PC-9 (cell line): ENCODE measurements at regions of chr22 and their contacts with region 1.

Region 1: DNA sequence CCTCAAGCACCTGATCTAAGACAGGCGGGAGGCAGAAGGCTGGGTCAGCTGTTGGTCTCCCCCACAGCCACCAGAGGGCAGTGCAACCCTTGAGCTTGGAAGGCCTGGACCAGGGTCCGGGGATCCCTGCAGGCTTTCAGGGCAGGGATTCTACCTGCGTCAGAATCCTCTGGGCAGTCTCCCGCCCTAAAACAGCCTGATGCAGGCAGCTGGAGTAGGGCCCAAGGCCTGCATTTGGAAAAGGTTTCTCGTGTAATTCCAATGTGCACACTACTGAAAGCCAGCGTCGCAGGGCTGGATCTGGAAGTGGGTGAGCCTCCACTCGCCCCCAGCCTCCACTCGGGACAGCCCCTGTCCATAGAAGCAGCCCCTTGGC is 31.8 kb downstream of the BID start:
- DNase-seq: peak; percentile 48 to 54
- H3K4me3 ChIP-seq: no peak overlapping the region
- H3K27ac ChIP-seq: no peak overlapping the region
- H3K4me1 ChIP-seq: no peaks in the 10 kb centered on the region
- H3K27me3 ChIP-seq: no peaks in the 10 kb centered on the region
- CTCF ChIP-seq: peak; percentile 74

Region 2: DNA sequence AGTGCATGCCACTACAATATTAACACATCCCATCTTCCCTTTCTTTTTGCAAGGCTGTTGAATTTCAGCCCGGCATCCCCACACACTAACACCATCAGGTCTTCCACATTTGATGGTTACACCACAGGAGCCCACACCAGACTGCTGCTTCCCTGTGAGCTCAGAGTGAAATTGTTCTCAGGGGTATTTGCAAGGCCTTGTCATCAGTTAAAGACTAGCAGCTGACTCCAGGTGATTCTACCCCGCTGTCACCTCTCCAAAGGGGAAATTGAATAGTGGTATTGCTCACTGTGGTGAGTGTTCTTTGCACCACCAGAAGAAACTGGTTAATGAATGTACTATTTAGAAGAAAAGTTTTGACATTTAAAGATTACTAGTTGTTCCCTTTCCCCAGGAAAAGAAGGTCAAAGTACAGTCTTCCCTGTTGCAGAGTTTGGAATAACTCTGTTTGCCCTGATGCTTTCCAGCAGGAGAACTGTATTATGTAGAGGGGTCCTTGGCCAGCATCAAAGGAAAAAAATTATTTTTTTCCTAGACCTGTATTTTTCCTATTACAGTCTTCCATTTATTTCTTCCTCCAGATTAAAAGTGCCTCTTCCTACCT is 10.2 kb before region 1 on chr22:
- CTCF ChIA-PET with region 1: interaction called, 12 read pairs
- POLR2A ChIA-PET with region 1: no interaction called
- intact Hi-C with region 1: no loop called
- DNase-seq: no peak
- H3K4me3 ChIP-seq: no peak overlapping the region
- H3K27ac ChIP-seq: no peak overlapping the region
- H3K4me1 ChIP-seq: no peaks in the 10 kb centered on the region
- H3K27me3 ChIP-seq: no peaks in the 10 kb centered on the region
- CTCF ChIP-seq: no peak